B cell (primary cell): ENCODE measurements at regions of chr4 and their contacts with region 1.

Region 1: GRCh38 chr4:88823058-88823919 is 125.7 kb upstream of the NAP1L5 start:
- DNase-seq: peak; percentile 74
- ATAC-seq: peak; percentile 81
- H3K4me3 ChIP-seq: peak overlapping the region; percentile 28 to 81 (median 50)
- H3K4me3 Mint-ChIP-seq: peak overlapping the region; percentile 95
- H3K27ac ChIP-seq: peak overlapping the region; percentile 1 to 39
- H3K27ac Mint-ChIP-seq: peak overlapping the region; percentile 87
- H3K4me1 ChIP-seq: peaks cover 4 to 7% of the 10 kb centered on the region in 2 donors
- H3K4me1 Mint-ChIP-seq: peaks cover 13% of the 10 kb centered on the region
- H3K27me3 ChIP-seq: peaks cover 0 to 2% (median 0%) of the 10 kb centered on the region in 4 experiments
- H3K27me3 Mint-ChIP-seq: peaks cover under 1% of the 10 kb centered on the region
- CTCF ChIP-seq: no peak

Region 2: GRCh38 chr4:88765729-88766128 is 57.6 kb before region 1 on chr4:
- CTCF ChIA-PET with region 1: no interaction called
- POLR2A ChIA-PET with region 1: no interaction called
- intact Hi-C with region 1: no loop called
- DNase-seq: no peak
- ATAC-seq: no peak
- H3K4me3 ChIP-seq: no peak overlapping the region
- H3K4me3 Mint-ChIP-seq: no peak overlapping the region
- H3K27ac ChIP-seq: no peak overlapping the region
- H3K27ac Mint-ChIP-seq: no peak overlapping the region
- H3K4me1 ChIP-seq: no peaks in the 10 kb centered on the region
- H3K4me1 Mint-ChIP-seq: no peaks in the 10 kb centered on the region
- H3K27me3 ChIP-seq: no peaks in the 10 kb centered on the region
- H3K27me3 Mint-ChIP-seq: peaks cover 16% of the 10 kb centered on the region
- CTCF ChIP-seq: no peak

Region 3: DNA sequence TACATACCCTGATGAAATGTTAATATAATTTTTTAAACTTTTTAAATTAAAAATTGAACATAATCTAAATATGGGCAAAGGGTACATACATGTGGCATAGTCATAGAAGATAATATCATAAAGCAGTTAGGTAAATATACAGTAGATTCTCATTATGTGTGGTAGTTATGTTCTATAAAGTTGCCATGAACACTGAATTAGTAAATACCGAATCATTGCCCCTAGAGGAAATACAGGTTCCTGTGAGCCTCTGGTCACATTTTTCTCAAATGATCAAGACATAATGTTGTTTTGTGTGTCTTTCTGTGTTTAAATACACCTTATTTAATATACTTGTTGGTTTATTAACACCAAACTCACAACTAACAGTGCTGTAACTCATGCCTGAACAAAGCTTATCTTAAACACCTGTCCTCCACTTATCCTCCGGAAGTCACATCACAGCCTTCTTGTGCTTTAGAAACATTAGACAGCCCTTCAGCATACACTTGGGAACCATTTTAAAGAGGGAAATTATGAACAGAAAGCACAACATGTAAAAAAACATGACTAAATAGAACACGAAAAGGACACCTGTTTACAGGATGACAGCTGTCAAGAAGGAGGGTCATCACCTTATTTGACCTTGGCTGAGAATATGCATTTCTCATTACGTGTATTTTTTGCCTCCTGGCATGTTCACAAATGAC is 43.7 kb after region 1 on chr4:
- CTCF ChIA-PET with region 1: no interaction called
- POLR2A ChIA-PET with region 1: no interaction called
- intact Hi-C with region 1: no loop called
- DNase-seq: no peak
- ATAC-seq: no peak
- H3K4me3 ChIP-seq: no peak overlapping the region
- H3K4me3 Mint-ChIP-seq: no peak overlapping the region
- H3K27ac ChIP-seq: no peak overlapping the region
- H3K27ac Mint-ChIP-seq: no peak overlapping the region
- H3K4me1 ChIP-seq: no peaks in the 10 kb centered on the region
- H3K4me1 Mint-ChIP-seq: no peaks in the 10 kb centered on the region
- H3K27me3 ChIP-seq: peaks cover 0 to 2% (median 0%) of the 10 kb centered on the region in 4 experiments
- H3K27me3 Mint-ChIP-seq: peaks cover 37% of the 10 kb centered on the region
- CTCF ChIP-seq: no peak

Region 4: GRCh38 chr4:89110986-89111832 is 287.9 kb after region 1 on chr4 and contains the start of gene TIGD2:
- CTCF ChIA-PET with region 1: no interaction called
- POLR2A ChIA-PET with region 1: no interaction called
- intact Hi-C with region 1: loop called (anchors 5 kb)
- DNase-seq: peak; percentile 94
- ATAC-seq: peak; percentile 92
- H3K4me3 ChIP-seq: peak within 1 kb of the TSS; percentile 70 to 88 (median 82)
- H3K4me3 Mint-ChIP-seq: peak within 1 kb of the TSS; percentile 88
- H3K27ac ChIP-seq: peak within 1 kb of the TSS; percentile 30 to 85
- H3K27ac Mint-ChIP-seq: peak within 1 kb of the TSS; percentile 85
- H3K4me1 ChIP-seq: peaks cover 14 to 18% of the 10 kb centered on the region in 2 donors
- H3K4me1 Mint-ChIP-seq: peaks cover 27% of the 10 kb centered on the region
- H3K27me3 ChIP-seq: peaks cover 0 to 4% (median 1%) of the 10 kb centered on the region in 4 experiments
- H3K27me3 Mint-ChIP-seq: peaks cover 2% of the 10 kb centered on the region
- CTCF ChIP-seq: peak; percentile 94
- total RNA-seq, gene TIGD2: 8.6 and 9.5 TPM in 2 replicates

Region 5: DNA sequence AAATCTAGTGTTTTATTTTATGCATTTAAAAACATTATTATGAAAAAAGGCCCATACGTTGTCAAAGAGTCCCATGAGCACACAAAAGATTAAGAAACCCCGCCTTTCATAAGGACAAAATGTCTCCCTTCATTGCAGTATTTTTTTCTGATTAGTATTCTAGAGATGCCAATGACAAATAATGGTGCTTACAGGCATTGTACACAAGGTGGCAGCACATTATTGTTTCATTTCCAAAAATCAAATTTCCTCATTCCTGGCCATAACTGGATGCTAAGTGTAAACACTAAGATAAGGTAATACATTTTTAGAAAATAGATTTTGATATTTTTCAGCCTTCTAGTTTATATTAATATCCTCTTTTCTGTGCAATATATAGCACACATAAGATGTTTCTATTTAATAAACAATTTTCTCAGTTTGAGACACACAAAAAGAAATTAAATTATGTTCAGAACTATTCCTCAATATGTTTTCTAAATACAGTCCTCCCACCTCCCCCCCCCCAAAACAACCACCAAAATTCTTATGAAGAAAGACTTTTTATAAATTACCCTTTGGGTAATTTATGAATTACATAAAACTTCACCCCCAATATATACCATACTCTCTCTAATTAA is 335.7 kb after region 1 on chr4:
- CTCF ChIA-PET with region 1: no interaction called
- POLR2A ChIA-PET with region 1: no interaction called
- intact Hi-C with region 1: loop called (anchors 5 kb)
- DNase-seq: peak; percentile 57
- ATAC-seq: peak; percentile 69
- H3K4me3 ChIP-seq: no peak overlapping the region
- H3K4me3 Mint-ChIP-seq: no peak overlapping the region
- H3K27ac ChIP-seq: no peak overlapping the region
- H3K27ac Mint-ChIP-seq: no peak overlapping the region
- H3K4me1 ChIP-seq: no peaks in the 10 kb centered on the region
- H3K4me1 Mint-ChIP-seq: no peaks in the 10 kb centered on the region
- H3K27me3 ChIP-seq: no peaks in the 10 kb centered on the region
- H3K27me3 Mint-ChIP-seq: peaks cover 6% of the 10 kb centered on the region
- CTCF ChIP-seq: peak; percentile 88

Region 6: DNA sequence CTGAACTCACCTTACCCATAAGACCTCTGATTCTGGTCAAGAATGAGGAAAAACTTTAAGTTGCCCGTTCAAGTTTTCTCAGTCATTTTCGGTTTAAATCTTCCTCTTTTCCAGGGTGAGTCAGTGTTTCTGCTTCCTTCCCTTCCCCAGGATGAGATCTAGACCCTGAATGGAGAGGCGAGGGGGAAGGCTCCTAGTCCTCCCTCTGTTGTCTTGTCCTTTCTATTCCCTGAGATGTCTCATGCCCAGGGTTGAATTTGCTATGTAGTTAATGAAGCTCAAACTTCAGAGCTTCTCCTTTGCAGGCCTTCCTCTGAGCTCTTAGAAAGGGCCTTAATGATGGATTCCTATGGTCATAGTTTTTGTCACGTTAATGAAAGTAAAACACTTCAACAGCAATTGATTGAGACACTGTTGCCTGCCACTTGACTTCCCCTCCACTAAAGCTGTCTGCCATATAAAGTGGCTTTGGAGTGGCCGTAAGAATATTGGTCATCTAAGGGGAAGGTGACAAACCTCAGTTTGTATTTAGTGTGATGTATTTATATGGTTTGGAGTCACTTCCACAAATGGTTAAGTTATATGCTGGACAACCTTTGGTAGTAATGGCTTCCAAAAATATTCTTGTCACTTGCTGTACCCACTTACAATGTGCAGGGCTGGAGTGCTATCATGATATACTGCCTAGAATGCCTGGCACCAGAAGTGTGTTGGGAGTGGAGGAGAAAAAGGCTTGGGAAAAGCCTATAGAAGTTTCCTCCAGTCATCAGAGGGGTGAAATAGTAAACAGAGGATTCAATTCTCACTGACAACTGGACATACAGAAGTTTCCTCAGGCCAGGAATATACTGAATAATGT is 508.6 kb after region 1 on chr4:
- CTCF ChIA-PET with region 1: no interaction called
- POLR2A ChIA-PET with region 1: no interaction called
- intact Hi-C with region 1: no loop called
- DNase-seq: no peak
- ATAC-seq: no peak
- H3K4me3 ChIP-seq: no peak overlapping the region
- H3K4me3 Mint-ChIP-seq: no peak overlapping the region
- H3K27ac ChIP-seq: no peak overlapping the region
- H3K27ac Mint-ChIP-seq: no peak overlapping the region
- H3K4me1 ChIP-seq: no peaks in the 10 kb centered on the region
- H3K4me1 Mint-ChIP-seq: peaks cover 7% of the 10 kb centered on the region
- H3K27me3 ChIP-seq: no peaks in the 10 kb centered on the region
- H3K27me3 Mint-ChIP-seq: no peaks in the 10 kb centered on the region
- CTCF ChIP-seq: no peak

Region 7: DNA sequence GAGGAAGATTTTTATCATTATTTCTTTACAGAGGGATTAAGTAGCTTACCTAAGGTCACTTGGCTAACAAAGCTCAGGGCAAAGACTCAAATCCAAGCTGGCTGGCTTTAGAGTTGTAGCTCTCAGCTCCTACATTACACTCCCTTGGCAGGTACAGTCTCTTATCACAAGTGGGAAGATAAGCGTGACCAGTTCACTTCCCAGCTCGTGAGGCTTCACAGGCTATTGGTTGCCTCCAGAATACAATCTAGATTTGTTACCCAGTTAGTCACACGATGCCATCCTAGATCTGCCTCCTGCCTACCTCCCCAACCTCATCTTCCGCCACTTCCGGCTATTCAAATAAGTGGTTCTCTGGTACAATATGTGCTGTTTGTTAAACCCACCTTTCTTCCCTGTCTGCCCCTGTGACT is 1075.0 kb after region 1 on chr4:
- CTCF ChIA-PET with region 1: no interaction called
- POLR2A ChIA-PET with region 1: no interaction called
- intact Hi-C with region 1: loop called (anchors 2 kb)
- DNase-seq: peak; percentile 5
- ATAC-seq: peak; percentile 43
- H3K4me3 ChIP-seq: no peak overlapping the region
- H3K4me3 Mint-ChIP-seq: no peak overlapping the region
- H3K27ac ChIP-seq: no peak overlapping the region
- H3K27ac Mint-ChIP-seq: no peak overlapping the region
- H3K4me1 ChIP-seq: peaks cover 13 to 32% of the 10 kb centered on the region in 2 donors
- H3K4me1 Mint-ChIP-seq: peaks cover 16% of the 10 kb centered on the region
- H3K27me3 ChIP-seq: peaks cover 0 to 20% (median 6%) of the 10 kb centered on the region in 4 experiments
- H3K27me3 Mint-ChIP-seq: peaks cover 8% of the 10 kb centered on the region
- CTCF ChIP-seq: no peak